ENCODE measurements at regions of chr11 and their contacts with region 1.

Region 1: GRCh38 chr11:14454861-14455632 is 44.6 kb downstream of the COPB1 start:
- DNase-seq: peak; percentile 60
- ATAC-seq: no peak
- H3K4me3 ChIP-seq: no peak overlapping the region
- H3K4me3 Mint-ChIP-seq: no peak overlapping the region
- H3K27ac ChIP-seq: no peak overlapping the region
- H3K27ac Mint-ChIP-seq: no peak overlapping the region
- H3K4me1 ChIP-seq: peaks cover 9 to 15% of the 10 kb centered on the region in 2 donors
- H3K4me1 Mint-ChIP-seq: peaks cover 24% of the 10 kb centered on the region
- H3K27me3 ChIP-seq: no peaks in the 10 kb centered on the region
- H3K27me3 Mint-ChIP-seq: no peaks in the 10 kb centered on the region
- CTCF ChIP-seq: peak; percentile 88

Region 2: GRCh38 chr11:13955971-13956421 is 499.1 kb before region 1 on chr11:
- CTCF ChIA-PET with region 1: interaction called, 11 read pairs
- POLR2A ChIA-PET with region 1: no interaction called
- intact Hi-C with region 1: loop called (anchors 5 kb)
- DNase-seq: peak; percentile 79
- ATAC-seq: peak; percentile 66
- H3K4me3 ChIP-seq: no peak overlapping the region
- H3K4me3 Mint-ChIP-seq: no peak overlapping the region
- H3K27ac ChIP-seq: no peak overlapping the region
- H3K27ac Mint-ChIP-seq: no peak overlapping the region
- H3K4me1 ChIP-seq: no peaks in the 10 kb centered on the region
- H3K4me1 Mint-ChIP-seq: no peaks in the 10 kb centered on the region
- H3K27me3 ChIP-seq: peaks cover 0 to 33% (median 20%) of the 10 kb centered on the region in 4 experiments
- H3K27me3 Mint-ChIP-seq: peaks cover 38% of the 10 kb centered on the region
- CTCF ChIP-seq: peak; percentile 91

Region 3: DNA sequence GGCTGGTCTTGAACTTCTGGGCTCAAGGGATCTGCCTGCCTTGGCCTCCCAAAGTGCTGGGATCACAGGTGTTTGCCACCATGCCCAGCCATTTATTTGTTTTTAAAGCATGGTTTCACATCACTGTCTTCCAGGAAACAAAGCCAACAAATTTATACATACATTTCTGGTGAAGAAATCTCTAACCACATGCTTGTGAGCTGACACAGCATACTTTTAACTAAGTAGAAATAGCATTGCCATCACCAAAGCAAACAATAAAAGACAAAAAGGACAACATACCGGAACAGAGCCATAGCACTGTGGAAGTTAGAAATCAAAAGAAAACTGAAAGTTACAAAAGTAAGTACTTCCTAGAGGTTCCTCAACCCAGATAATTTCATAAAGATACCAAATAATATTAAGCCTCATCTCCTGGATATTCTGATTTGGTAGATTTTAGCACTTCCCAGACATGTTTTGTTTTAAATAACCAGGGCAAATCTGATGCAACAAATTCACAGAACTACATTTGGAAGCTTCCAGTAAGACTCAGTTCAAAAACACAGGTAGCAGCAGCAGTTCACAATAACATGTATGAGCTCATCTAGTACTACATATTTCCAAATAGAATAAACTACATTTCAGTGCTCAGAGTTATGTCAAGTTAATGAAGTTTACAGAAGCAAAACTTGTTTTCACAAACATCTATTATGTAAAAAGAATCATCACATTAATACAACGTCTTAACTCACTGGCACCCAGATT is 166.7 kb before region 1 on chr11:
- CTCF ChIA-PET with region 1: interaction called, 45 read pairs
- POLR2A ChIA-PET with region 1: no interaction called
- intact Hi-C with region 1: no loop called
- DNase-seq: no peak
- ATAC-seq: no peak
- H3K4me3 ChIP-seq: no peak overlapping the region
- H3K4me3 Mint-ChIP-seq: no peak overlapping the region
- H3K27ac ChIP-seq: peak overlapping the region in 1 of 2 donors; percentile 3
- H3K27ac Mint-ChIP-seq: peak overlapping the region; percentile 64
- H3K4me1 ChIP-seq: peaks cover 4% of the 10 kb centered on the region in 2 donors
- H3K4me1 Mint-ChIP-seq: peaks cover 18% of the 10 kb centered on the region
- H3K27me3 ChIP-seq: no peaks in the 10 kb centered on the region
- H3K27me3 Mint-ChIP-seq: no peaks in the 10 kb centered on the region
- CTCF ChIP-seq: no peak

Region 4: GRCh38 chr11:14358729-14359439 is 96.2 kb before region 1 on chr11 and contains the start of gene RRAS2:
- CTCF ChIA-PET with region 1: interaction called, 6 read pairs
- POLR2A ChIA-PET with region 1: no interaction called
- intact Hi-C with region 1: loop called (anchors 2 kb)
- DNase-seq: peak; percentile 90
- ATAC-seq: peak; percentile 91
- H3K4me3 ChIP-seq: peak within 1 kb of the TSS; percentile 65 to 94 (median 88)
- H3K4me3 Mint-ChIP-seq: peak within 1 kb of the TSS; percentile 91
- H3K27ac ChIP-seq: peak within 1 kb of the TSS; percentile 52 to 76
- H3K27ac Mint-ChIP-seq: peak within 1 kb of the TSS; percentile 87
- H3K4me1 ChIP-seq: peaks cover 28 to 36% of the 10 kb centered on the region in 2 donors
- H3K4me1 Mint-ChIP-seq: peaks cover 43% of the 10 kb centered on the region
- H3K27me3 ChIP-seq: no peaks in the 10 kb centered on the region
- H3K27me3 Mint-ChIP-seq: no peaks in the 10 kb centered on the region
- CTCF ChIP-seq: no peak
- total RNA-seq, gene RRAS2: 72.4 and 80.1 TPM in 2 replicates

Region 5: DNA sequence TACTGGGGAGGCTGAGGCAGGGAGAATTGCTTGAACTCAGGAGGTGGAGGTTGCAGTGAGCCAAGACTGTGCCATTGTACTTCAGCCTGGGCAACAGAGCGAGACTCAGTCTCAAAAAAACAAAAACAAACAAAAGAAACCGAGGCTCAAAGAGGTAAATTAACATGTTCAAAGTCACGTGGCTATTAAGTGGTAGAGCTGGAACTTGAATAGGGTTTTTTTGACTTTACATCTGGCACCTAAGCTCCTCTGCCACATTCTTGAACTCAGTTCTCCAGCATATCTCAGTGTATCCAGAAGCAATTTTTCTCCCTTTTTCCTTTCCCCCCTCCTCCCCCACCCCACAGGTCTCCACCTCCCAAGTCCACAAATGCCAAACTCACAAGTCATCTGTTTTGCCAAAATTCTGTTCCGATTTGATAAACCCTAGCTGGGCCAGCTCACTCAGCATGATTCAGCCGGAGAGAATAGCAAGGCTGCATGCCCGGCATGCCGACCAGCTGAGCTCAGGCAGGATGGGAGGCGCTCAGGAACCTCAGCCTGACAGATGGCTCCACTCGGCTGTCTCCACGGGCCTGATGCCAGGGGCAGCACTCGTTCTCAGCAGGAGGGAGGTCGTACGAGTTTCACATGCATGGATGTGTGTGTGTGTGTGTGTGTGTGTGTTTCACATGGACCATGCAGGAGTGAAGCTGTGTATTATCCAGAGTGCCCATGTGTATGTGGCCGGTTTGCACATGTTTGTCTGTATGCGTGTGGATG is 32.8 kb before region 1 on chr11:
- CTCF ChIA-PET with region 1: interaction called, 14 read pairs
- POLR2A ChIA-PET with region 1: interaction called, 4 read pairs
- intact Hi-C with region 1: no loop called
- DNase-seq: no peak
- ATAC-seq: no peak
- H3K4me3 ChIP-seq: no peak overlapping the region
- H3K4me3 Mint-ChIP-seq: no peak overlapping the region
- H3K27ac ChIP-seq: no peak overlapping the region
- H3K27ac Mint-ChIP-seq: no peak overlapping the region
- H3K4me1 ChIP-seq: peaks cover 8 to 17% of the 10 kb centered on the region in 2 donors
- H3K4me1 Mint-ChIP-seq: peaks cover 4% of the 10 kb centered on the region
- H3K27me3 ChIP-seq: peaks cover 0 to 3% (median 0%) of the 10 kb centered on the region in 4 experiments
- H3K27me3 Mint-ChIP-seq: no peaks in the 10 kb centered on the region
- CTCF ChIP-seq: no peak

Region 6: DNA sequence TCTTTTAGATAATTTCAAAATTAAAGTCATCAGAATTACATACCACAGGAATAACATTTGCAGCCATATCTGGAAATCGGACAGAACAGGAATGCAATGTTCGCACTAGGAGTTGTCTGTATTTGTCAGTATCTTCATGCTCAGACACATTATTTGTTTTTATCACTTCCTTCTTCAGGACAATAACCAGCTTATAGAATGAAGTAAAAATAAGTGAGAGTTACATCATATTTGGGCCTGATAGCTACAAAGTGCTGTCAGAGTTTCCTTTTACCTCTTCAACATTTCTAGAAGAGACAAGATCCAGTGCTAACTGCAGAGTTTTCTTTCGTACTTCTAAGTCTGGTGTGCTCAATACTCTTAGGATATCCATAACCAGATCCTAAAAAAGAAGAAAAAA is 25.7 kb after region 1 on chr11:
- CTCF ChIA-PET with region 1: interaction called, 16 read pairs
- POLR2A ChIA-PET with region 1: no interaction called
- intact Hi-C with region 1: no loop called
- DNase-seq: no peak
- ATAC-seq: no peak
- H3K4me3 ChIP-seq: no peak overlapping the region
- H3K4me3 Mint-ChIP-seq: no peak overlapping the region
- H3K27ac ChIP-seq: no peak overlapping the region
- H3K27ac Mint-ChIP-seq: no peak overlapping the region
- H3K4me1 ChIP-seq: no peaks in the 10 kb centered on the region
- H3K4me1 Mint-ChIP-seq: peaks cover 2% of the 10 kb centered on the region
- H3K27me3 ChIP-seq: no peaks in the 10 kb centered on the region
- H3K27me3 Mint-ChIP-seq: no peaks in the 10 kb centered on the region
- CTCF ChIP-seq: no peak

Region 7: GRCh38 chr11:14882196-14882595 is 427.1 kb after region 1 on chr11:
- CTCF ChIA-PET with region 1: no interaction called
- POLR2A ChIA-PET with region 1: no interaction called
- intact Hi-C with region 1: no loop called
- DNase-seq: no peak
- ATAC-seq: no peak
- H3K4me3 ChIP-seq: no peak overlapping the region
- H3K4me3 Mint-ChIP-seq: no peak overlapping the region
- H3K27ac ChIP-seq: no peak overlapping the region
- H3K27ac Mint-ChIP-seq: no peak overlapping the region
- H3K4me1 ChIP-seq: peaks cover 5 to 9% of the 10 kb centered on the region in 2 donors
- H3K4me1 Mint-ChIP-seq: peaks cover 27% of the 10 kb centered on the region
- H3K27me3 ChIP-seq: no peaks in the 10 kb centered on the region
- H3K27me3 Mint-ChIP-seq: no peaks in the 10 kb centered on the region
- CTCF ChIP-seq: no peak